ENCODE measurements at regions of chr6 and their contacts with region 1.

Region 1: GRCh38 chr6:75526502-75527127 is 33.0 kb upstream of the FILIP1 start:
- DNase-seq: peak; percentile 67
- ATAC-seq: peak; percentile 92
- H3K4me3 ChIP-seq: no peak overlapping the region
- H3K27ac ChIP-seq: no peak overlapping the region
- H3K4me1 ChIP-seq: peaks cover 0 to 7% of the 10 kb centered on the region in 2 experiments; a peak in 1 of 4 replicates
- H3K27me3 ChIP-seq: no peaks in the 10 kb centered on the region
- CTCF ChIP-seq: peak; percentile 51 to 79 (median 78)
- POLR2A ChIP-seq: no peak
- RAD21 ChIP-seq: peak; percentile 91

Region 2: DNA sequence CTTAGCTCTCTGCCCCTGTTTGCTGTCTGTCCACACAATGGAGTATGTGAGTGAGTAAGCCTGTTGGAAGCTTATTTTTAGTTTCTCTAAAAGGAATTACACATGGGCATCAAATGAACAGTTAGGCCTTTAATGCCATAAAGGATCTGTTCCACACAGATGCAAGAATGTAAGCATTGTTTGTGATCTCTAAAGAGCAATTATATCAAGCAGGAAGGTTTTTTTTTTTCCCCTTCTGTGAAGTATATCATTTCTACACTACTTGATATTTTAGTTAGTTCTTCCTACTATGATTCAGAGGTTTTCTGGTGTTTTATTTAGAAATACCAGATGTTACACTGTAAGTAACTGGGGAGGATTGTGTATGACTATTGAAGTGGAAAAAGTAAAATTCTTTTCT is 948.3 kb before region 1 on chr6:
- CTCF ChIA-PET with region 1: no interaction called
- POLR2A ChIA-PET with region 1: no interaction called
- RAD21 ChIA-PET with region 1: no interaction called
- intact Hi-C with region 1: no loop called
- DNase-seq: no peak
- ATAC-seq: no peak
- H3K4me3 ChIP-seq: no peak overlapping the region
- H3K27ac ChIP-seq: no peak overlapping the region
- H3K4me1 ChIP-seq: no peaks in the 10 kb centered on the region
- H3K27me3 ChIP-seq: no peaks in the 10 kb centered on the region
- CTCF ChIP-seq: no peak
- POLR2A ChIP-seq: no peak
- RAD21 ChIP-seq: no peak

Region 3: GRCh38 chr6:75266716-75267291 is 259.8 kb before region 1 on chr6:
- CTCF ChIA-PET with region 1: interaction called, 4 read pairs
- POLR2A ChIA-PET with region 1: no interaction called
- RAD21 ChIA-PET with region 1: no interaction called
- intact Hi-C with region 1: loop called (anchors 1 kb)
- DNase-seq: no peak
- ATAC-seq: peak; percentile 77
- H3K4me3 ChIP-seq: no peak overlapping the region
- H3K27ac ChIP-seq: no peak overlapping the region
- H3K4me1 ChIP-seq: peaks cover 0 to 10% of the 10 kb centered on the region in 2 experiments; a peak in 1 of 4 replicates
- H3K27me3 ChIP-seq: no peaks in the 10 kb centered on the region
- CTCF ChIP-seq: peak; percentile 47 to 83 (median 70); a peak in 5 of 6 replicates
- POLR2A ChIP-seq: no peak
- RAD21 ChIP-seq: peak; percentile 64

Region 4: GRCh38 chr6:75296811-75297779 is 229.5 kb before region 1 on chr6:
- CTCF ChIA-PET with region 1: interaction called, 9 read pairs
- POLR2A ChIA-PET with region 1: no interaction called
- RAD21 ChIA-PET with region 1: interaction called in 1 of 2 experiments, 4 read pairs
- intact Hi-C with region 1: loop called (anchors 1 kb)
- DNase-seq: peak; percentile 65
- ATAC-seq: peak; percentile 72
- H3K4me3 ChIP-seq: no peak overlapping the region
- H3K27ac ChIP-seq: no peak overlapping the region
- H3K4me1 ChIP-seq: no peaks in the 10 kb centered on the region
- H3K27me3 ChIP-seq: no peaks in the 10 kb centered on the region
- CTCF ChIP-seq: peak; percentile 55 to 75 (median 72)
- POLR2A ChIP-seq: no peak
- RAD21 ChIP-seq: peak; percentile 79

Region 5: DNA sequence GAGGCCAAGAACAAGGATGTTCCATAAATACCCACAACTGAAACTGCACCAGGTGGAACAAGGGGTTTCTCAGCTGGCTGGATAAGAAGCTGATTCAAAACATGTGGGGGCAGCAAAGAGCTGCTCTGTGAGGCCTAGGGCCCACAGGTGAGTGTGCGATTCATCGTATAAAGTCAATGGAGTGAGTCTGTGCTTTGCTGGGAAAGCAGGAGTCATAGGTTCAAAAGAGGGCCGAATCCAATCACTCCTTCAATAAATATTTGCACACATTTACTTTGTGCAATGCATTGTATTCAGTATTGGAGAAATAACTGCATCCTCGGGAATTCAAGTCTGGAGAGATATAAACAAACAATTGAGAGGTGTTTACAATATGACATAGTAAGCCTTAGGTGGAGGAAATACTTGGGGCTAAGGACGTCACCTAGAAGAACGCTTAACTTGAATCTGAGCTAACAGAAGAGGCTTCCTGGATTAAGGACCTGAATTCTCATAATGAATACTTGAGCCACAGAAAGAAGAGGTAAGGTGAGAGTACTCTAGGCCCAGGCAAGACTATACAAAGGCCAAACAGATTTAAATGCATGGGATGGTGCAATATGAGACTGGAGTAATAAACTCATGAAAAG is 158.3 kb before region 1 on chr6:
- CTCF ChIA-PET with region 1: interaction called, 6 read pairs
- POLR2A ChIA-PET with region 1: no interaction called
- RAD21 ChIA-PET with region 1: no interaction called
- intact Hi-C with region 1: loop called (anchors 1 kb)
- DNase-seq: peak; percentile 42
- ATAC-seq: peak; percentile 98
- H3K4me3 ChIP-seq: no peak overlapping the region
- H3K27ac ChIP-seq: no peak overlapping the region
- H3K4me1 ChIP-seq: no peaks in the 10 kb centered on the region
- H3K27me3 ChIP-seq: no peaks in the 10 kb centered on the region
- CTCF ChIP-seq: peak; percentile 52 to 69 (median 63); a peak in 5 of 6 replicates
- POLR2A ChIP-seq: no peak
- RAD21 ChIP-seq: peak; percentile 82

Region 6: GRCh38 chr6:75579951-75580350 is 53.3 kb after region 1 on chr6:
- CTCF ChIA-PET with region 1: no interaction called
- POLR2A ChIA-PET with region 1: no interaction called
- RAD21 ChIA-PET with region 1: no interaction called
- intact Hi-C with region 1: no loop called
- DNase-seq: no peak
- ATAC-seq: no peak
- H3K4me3 ChIP-seq: no peak overlapping the region
- H3K27ac ChIP-seq: no peak overlapping the region
- H3K4me1 ChIP-seq: no peaks in the 10 kb centered on the region
- H3K27me3 ChIP-seq: no peaks in the 10 kb centered on the region
- CTCF ChIP-seq: no peak
- POLR2A ChIP-seq: no peak
- RAD21 ChIP-seq: no peak